Right ventricle myocardium inferior (tissue), 1 donor: ENCODE measurements at regions of chr20 and their contacts with region 1.

Region 1: GRCh38 chr20:16761305-16761829 is 13.2 kb downstream of the OTOR start:
- DNase-seq: no peak
- ATAC-seq: peak; percentile 56

Region 2: GRCh38 chr20:16701296-16701695 is 60.1 kb before region 1 on chr20:
- intact Hi-C with region 1: loop called (anchors 5 kb)
- DNase-seq: no peak
- ATAC-seq: no peak